Heart left ventricle (tissue), 16 donors: ENCODE measurements at regions of chr19 and their contacts with region 1.

Region 1: GRCh38 chr19:43446746-43447489 is 18.5 kb downstream of the LYPD3 start:
- DNase-seq: peak; percentile 70 to 90 (median 73)
- ATAC-seq: peak; percentile 70 to 89 (median 88)
- H3K4me3 ChIP-seq: no peak overlapping the region
- H3K27ac ChIP-seq: no peak overlapping the region
- H3K4me1 ChIP-seq: peaks cover 0 to 11% (median 0%) of the 10 kb centered on the region in 12 donors
- H3K27me3 ChIP-seq: no peaks in the 10 kb centered on the region
- CTCF ChIP-seq: peak; percentile 89 to 98 (median 94)
- POLR2A ChIP-seq: no peak

Region 2: DNA sequence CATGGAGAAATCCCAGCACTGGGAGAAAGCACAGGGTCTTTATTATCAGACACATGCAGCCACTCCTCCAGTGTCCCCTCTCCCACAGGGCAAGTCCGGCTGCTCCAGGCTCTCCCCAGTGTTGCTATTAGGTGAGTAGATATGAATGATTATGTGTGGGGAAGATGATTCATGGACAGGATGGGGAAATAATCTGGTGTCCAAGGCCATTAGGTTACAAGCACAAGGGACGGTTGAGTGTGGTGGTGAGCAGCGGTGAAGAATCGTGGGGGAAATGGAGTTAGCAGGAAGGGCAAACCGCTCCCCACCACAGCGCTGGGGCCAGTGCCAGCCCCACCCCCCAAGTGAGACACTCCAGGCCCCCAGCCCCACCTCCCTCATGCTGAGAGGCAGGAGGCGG is 74.5 kb before region 1 on chr19:
- intact Hi-C with region 1: no loop called
- DNase-seq: no peak
- ATAC-seq: no peak
- H3K4me3 ChIP-seq: no peak overlapping the region
- H3K27ac ChIP-seq: no peak overlapping the region
- H3K4me1 ChIP-seq: no peaks in the 10 kb centered on the region
- H3K27me3 ChIP-seq: peaks cover 0 to 8% (median 0%) of the 10 kb centered on the region in 9 donors
- CTCF ChIP-seq: no peak
- POLR2A ChIP-seq: no peak

Region 3: DNA sequence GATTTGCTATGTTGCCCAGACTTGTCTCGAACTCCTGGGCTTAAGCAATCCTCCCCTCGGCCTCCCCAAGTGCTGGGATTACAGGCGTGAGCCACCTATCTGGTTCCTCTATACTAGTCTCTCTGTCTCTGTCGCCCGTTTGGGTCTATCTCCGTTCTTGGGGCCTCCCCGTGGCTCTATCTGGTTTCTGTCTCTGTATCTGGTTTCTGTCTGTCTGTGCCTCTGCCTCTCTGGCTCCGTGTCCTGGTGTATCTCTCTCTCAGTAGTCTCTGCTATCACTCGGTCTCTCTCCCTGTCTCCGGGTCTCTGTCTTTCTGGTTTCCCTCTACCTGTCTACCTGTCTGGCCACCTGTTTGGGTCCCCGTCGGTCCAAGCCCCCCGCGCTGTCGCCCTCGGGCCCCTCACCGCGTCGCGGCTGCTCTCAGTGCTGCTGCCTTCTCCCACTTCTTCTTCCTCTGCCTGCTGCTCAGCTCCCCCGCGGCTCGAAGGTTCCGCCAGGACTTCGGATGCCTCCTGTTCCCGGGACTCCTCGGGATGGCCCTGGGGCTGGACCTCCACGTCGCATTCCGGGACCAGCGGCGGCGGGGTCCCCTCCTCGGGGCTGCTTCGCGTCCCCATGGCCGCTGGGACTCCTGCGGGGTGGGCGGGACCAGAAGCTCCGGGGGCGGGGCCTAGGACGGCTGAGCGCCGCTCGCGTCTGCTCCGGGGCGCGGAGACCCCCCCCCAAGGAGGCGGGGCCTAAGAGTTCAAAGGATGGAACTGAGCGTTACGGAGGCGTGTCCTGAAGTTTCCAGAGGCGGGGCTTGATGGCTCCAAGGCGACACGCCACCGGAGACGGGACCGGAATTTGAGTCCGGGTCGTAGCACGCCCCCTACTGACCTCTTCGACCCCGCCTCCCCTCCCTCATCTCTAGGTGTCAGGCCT is 56.8 kb after region 1 on chr19:
- intact Hi-C with region 1: loop called in 1 of 10 experiments (anchors 1 kb)
- DNase-seq: peak; percentile 97 to 99 (median 98)
- ATAC-seq: peak; percentile 98 to 99 (median 99)
- H3K4me3 ChIP-seq: peak overlapping the region; percentile 45 to 95 (median 78)
- H3K27ac ChIP-seq: peak overlapping the region; percentile 42 to 97 (median 89)
- H3K4me1 ChIP-seq: peaks cover 0 to 29% (median 14%) of the 10 kb centered on the region in 12 donors
- H3K27me3 ChIP-seq: no peaks in the 10 kb centered on the region
- CTCF ChIP-seq: peak in 7 of 12 donors; percentile 14 to 53 (median 33)
- POLR2A ChIP-seq: peak in 1 of 2 donors; percentile 38

Region 4: DNA sequence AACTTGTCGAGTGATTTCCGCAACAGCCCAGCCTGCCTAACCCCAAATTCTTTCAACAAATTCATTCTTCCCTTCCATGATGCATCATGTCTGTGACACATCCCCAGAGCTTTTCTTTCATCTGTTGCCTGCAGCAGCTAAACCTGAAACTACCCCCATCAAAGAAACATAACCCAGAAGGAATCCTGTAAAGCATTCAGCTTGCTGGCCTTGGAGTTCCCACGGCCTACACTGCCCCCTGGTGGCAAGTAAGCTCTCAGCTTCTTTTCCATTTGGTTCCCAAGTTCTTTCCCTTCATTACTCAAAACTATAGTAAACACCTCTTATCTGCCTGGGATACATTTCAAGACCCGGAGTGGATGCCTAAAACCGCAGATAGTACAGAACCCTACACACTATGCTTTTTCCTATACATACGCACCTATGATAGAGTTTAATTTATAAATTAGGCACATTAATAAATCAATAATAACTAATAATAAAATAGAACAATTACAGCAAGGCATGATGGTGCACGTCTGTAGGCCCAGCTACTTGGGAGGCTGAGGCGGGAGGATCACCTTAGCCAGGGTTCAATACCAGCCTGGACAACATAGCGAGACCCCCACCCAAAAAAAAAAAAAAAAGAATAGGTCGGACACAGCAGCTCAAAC is 72.6 kb after region 1 on chr19:
- intact Hi-C with region 1: loop called (anchors 1 to 2 kb)
- DNase-seq: peak; percentile 59 to 82 (median 74)
- ATAC-seq: peak in 3 of 4 donors; percentile 69 to 71 (median 69)
- H3K4me3 ChIP-seq: no peak overlapping the region
- H3K27ac ChIP-seq: no peak overlapping the region
- H3K4me1 ChIP-seq: peaks cover 0 to 14% (median 0%) of the 10 kb centered on the region in 12 donors
- H3K27me3 ChIP-seq: no peaks in the 10 kb centered on the region
- CTCF ChIP-seq: peak; percentile 82 to 96 (median 90)
- POLR2A ChIP-seq: no peak

Region 5: DNA sequence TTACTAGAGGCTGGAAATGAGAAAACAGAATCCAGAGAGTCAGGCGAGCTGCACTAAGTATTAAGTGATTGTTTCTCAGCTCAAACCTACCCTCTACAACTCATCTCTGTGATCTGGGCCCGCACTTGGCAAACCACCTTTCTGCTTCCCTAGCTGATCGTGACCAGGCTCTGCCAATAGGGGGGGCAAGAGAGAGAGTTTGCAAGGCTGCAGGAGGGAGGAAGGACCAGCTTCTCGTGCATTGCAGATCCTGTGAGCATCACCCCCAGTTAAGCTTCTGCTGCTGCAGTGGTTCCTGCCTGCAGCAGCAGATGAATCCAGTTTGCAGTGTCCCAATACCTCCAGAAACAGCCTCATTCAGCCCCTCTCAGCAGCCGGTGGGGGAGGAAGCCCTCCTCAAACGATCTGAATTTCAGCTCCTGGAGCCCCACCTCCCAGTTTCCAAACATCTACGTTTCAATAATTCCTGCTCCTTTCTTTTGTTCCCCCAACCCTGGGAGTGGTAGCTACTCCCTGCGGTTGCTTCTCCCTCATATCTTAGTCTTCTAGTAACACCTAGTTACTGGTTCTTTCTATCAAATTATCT is 108.4 kb after region 1 on chr19:
- intact Hi-C with region 1: no loop called
- DNase-seq: peak in 4 of 5 donors; percentile 53 to 67 (median 58)
- ATAC-seq: peak in 3 of 4 donors; percentile 38 to 58 (median 50)
- H3K4me3 ChIP-seq: no peak overlapping the region
- H3K27ac ChIP-seq: no peak overlapping the region
- H3K4me1 ChIP-seq: no peaks in the 10 kb centered on the region
- H3K27me3 ChIP-seq: no peaks in the 10 kb centered on the region
- CTCF ChIP-seq: peak; percentile 45 to 70 (median 56)
- POLR2A ChIP-seq: no peak

Region 6: DNA sequence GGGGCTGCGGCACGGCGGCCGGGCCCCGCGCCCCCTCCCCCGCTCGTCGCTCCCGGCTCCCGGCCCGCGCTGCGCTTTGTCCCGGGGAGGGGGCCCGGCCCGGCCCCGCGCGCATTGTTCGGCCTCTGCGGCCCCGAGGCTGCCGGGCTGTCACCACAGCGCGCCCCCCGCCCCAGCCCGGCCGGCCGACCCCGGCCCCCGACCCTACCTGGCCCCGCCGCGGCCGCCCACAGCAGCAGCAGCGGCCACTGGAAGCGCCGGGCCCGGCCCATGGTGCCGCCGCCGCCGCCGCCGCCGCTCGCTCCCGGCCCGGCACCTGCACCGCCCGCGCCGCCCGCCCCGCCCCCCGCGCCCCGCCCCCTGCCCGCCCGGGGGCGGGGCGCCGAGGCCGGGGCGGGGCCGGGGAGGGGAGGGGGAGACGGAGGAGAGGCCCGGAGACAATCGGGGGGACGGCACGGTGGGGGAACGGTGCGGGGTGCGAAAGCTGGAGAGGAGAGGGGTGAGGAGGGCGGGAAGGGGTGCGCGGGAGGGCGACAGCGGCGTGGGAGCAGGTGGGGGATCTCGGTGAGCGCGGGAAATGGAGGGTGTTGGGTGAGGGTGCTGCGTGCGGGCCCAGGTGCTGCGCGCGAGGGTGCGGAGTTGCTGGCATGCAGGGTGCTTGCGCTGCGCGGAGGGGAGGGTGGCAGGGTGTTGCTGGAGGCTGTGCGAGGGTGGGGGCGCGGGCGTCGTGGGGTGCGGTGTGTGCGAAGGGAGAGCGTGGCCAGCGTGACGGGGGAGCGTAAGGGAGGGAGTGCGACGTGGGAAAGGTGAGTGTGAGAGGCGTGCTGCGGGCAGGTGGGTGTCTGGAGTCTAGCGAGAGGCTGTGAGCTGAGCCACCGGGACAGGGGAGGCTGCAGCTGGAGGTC is 192.9 kb after region 1 on chr19 and contains the start of gene CADM4:
- intact Hi-C with region 1: loop called in 1 of 10 experiments (anchors 10 kb)
- DNase-seq: peak in 2 of 5 donors; percentile 14 to 38
- ATAC-seq: peak in 3 of 4 donors; percentile 52 to 79 (median 62)
- H3K4me3 ChIP-seq: peak within 1 kb of the TSS; percentile 17 to 60 (median 52)
- H3K27ac ChIP-seq: peak within 1 kb of the TSS in 2 of 12 donors; percentile 44 to 60
- H3K4me1 ChIP-seq: peaks cover 0 to 17% (median 6%) of the 10 kb centered on the region in 12 donors
- H3K27me3 ChIP-seq: peaks cover 0 to 30% (median 10%) of the 10 kb centered on the region in 9 donors
- CTCF ChIP-seq: no peak
- POLR2A ChIP-seq: no peak
- total RNA-seq, gene CADM4: 4.6 to 13.2 (median 7.8) TPM

Region 7: DNA sequence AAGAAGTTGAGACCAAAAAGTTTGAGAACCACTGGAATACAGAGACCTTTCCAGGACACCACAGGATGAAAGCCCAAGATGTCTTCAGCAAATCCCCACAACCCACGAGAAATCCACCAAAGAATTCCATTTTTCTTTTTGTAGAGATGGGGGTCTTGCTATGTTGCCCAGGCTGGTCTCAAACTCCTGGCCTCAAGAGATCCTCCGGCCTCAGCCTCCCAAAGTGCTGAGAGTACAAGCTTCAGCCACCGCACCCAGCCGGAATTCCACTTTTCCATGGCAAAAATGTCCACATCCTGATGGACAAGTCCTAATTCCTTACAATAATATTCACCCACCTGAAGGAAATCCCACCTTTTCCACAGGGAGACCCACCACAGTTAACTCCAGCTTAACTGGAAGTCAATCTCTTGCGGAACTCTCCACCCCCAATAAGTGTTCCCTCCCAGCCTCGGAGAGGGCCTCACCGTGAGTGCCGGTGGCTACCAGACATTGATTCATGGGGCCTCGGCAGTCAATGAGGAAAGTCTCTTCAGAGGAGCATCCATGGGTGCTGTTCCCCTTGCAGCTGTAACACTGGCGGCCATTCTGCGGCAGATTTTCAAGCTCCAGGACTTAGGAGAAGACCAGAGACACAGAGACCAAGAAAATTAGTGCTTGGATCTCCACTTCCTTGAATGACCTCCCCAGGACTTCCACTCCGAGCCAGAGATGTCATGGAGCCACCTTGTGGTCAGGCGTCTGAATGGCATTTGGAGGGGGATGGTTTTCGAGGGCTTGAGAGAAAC is 205.0 kb after region 1 on chr19:
- intact Hi-C with region 1: loop called in 6 of 10 experiments (anchors 5 to 10 kb)
- DNase-seq: peak in 4 of 5 donors; percentile 44 to 62 (median 47)
- ATAC-seq: peak in 3 of 4 donors; percentile 67 to 82 (median 80)
- H3K4me3 ChIP-seq: peak overlapping the region in 1 of 12 donors; percentile 25
- H3K27ac ChIP-seq: no peak overlapping the region
- H3K4me1 ChIP-seq: peaks cover 0 to 4% (median 0%) of the 10 kb centered on the region in 12 donors
- H3K27me3 ChIP-seq: no peaks in the 10 kb centered on the region
- CTCF ChIP-seq: peak; percentile 59 to 81 (median 76)
- POLR2A ChIP-seq: no peak